ENCODE measurements at regions of chr1 and their contacts with region 1.

Region 1: GRCh38 chr1:1348420-1349255 is 580 bp downstream of the DVL1 start:
- H3K4me3 ChIP-seq: peak overlapping the region; percentile 64
- H3K27ac ChIP-seq: peak overlapping the region; percentile 87
- H3K4me1 ChIP-seq: peaks cover 10% of the 10 kb centered on the region
- CTCF ChIP-seq: no peak

Region 2: DNA sequence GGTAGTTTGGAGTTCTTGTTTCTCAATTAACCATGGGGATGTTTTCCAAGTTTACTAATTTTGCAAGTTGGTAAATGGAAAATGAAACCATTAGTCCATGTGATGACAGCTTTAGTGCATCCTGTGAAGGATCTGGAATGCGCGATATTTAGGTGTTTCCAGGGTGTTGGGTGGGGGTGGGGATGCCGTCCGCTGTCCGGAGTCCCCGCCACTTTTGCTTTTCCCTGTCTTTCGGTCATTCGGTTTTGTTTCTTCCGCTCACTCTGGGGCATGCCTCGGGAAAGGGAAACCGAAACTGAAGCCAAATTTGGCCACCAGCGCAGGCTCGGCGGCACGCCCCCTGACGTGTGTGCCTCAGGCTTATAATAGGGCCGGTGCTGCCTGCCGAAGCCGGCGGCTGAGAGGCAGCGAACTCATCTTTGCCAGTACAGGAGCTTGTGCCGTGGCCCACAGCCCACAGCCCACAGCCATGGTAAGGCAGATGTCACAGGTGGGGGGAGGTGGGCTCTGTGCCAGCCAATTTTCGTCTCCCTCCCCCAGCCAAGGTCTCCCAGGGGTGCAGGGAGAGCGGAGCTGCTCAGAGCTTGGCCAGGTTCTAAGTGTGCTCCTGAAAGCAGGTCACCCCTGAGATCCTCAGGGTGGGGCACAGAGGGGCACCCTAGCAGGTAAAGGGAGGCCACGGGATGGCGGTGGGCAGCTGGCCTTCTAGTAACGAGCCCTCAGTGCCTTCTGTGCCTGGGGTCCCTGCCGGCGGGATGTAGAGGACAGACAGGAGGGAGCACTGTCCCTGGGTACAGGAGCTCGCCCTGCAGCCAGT is 335.3 kb before region 1 on chr1 and contains the start of gene ISG15:
- CTCF ChIA-PET with region 1: no interaction called
- POLR2A ChIA-PET with region 1: interaction called, 10 read pairs
- H3K4me3 ChIP-seq: peak within 1 kb of the TSS; percentile 32
- H3K27ac ChIP-seq: no peak within 1 kb of the TSS
- H3K4me1 ChIP-seq: no peaks in the 10 kb centered on the region
- CTCF ChIP-seq: no peak

Region 3: GRCh38 chr1:1256956-1257871 is 91.4 kb before region 1 on chr1:
- CTCF ChIA-PET with region 1: no interaction called
- POLR2A ChIA-PET with region 1: interaction called, 10 read pairs
- H3K4me3 ChIP-seq: no peak overlapping the region
- H3K27ac ChIP-seq: no peak overlapping the region
- H3K4me1 ChIP-seq: no peaks in the 10 kb centered on the region
- CTCF ChIP-seq: no peak

Region 4: DNA sequence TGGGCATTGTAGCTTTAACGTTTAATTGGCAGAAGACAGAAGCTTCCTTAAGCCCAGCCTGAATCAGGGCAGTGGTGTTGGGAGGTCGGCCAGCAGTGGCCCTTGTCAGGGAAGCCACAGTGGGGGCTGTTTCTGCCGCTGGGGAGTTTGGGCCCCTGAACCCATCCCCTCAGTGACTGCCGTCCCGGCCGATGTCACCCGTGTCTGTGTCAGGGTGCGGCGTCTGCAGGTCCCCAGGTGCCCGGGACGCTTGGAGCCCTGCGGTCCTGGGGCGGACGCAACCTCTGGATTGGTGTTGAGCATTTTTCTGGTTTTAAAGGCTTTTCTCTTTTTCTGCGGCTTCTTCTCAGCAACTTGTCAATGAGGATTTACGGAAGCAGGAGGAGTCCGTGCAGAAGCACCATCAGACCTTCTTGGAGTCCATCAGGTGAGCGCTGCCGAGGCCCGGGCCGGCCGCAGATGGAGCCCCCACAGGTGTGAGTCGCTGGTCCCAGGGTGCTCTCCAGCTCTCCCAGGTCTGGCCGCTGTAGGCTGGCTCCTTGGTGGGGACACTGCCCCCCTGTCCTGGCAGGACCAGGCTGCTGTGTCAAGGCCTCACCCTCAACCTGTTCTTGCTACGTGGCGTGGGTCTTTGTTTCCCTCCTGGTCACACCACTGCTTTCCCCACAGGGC is 103.2 kb after region 1 on chr1:
- CTCF ChIA-PET with region 1: no interaction called
- POLR2A ChIA-PET with region 1: no interaction called
- H3K4me3 ChIP-seq: no peak overlapping the region
- H3K27ac ChIP-seq: no peak overlapping the region
- H3K4me1 ChIP-seq: no peaks in the 10 kb centered on the region
- CTCF ChIP-seq: no peak